Activated CD4-positive, alpha-beta memory T cell treated with anti-CD3 and anti-CD28 coated beads for 36 hours (primary cell): ENCODE measurements at regions of chr4 and their contacts with region 1.

Region 1: GRCh38 chr4:71941001-71941400 is 90.8 kb upstream of the NPFFR2 start:
- DNase-seq: no peak
- H3K4me3 Mint-ChIP-seq: no peak overlapping the region
- H3K27ac Mint-ChIP-seq: no peak overlapping the region
- H3K4me1 Mint-ChIP-seq: no peaks in the 10 kb centered on the region
- H3K27me3 Mint-ChIP-seq: no peaks in the 10 kb centered on the region

Region 2: DNA sequence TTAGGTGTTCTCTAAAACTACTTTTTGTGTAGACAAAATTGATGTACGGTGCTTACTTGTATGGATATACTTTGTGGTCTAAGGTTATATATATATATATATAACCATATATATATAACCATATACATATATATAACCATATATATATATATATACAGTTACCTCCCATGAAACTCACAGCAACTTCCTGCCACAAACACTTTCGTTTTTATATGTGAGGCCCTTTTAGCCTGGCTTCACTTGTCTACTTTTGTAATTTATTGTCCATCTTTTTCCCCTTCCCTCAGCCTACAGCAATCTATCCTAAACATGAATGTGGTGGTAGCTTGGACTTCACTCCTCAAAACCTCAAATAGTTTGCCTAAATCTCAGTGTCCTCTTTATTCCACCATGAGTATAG is 18.0 kb after region 1 on chr4:
- CTCF ChIA-PET with region 1: no interaction called
- POLR2A ChIA-PET with region 1: no interaction called
- intact Hi-C with region 1: loop called (anchors 1 kb)
- DNase-seq: no peak
- H3K4me3 Mint-ChIP-seq: no peak overlapping the region
- H3K27ac Mint-ChIP-seq: no peak overlapping the region
- H3K4me1 Mint-ChIP-seq: no peaks in the 10 kb centered on the region
- H3K27me3 Mint-ChIP-seq: no peaks in the 10 kb centered on the region